Ascending aorta (tissue), 2 donors: ENCODE measurements at regions of chr17 and their contacts with region 1.

Region 1: DNA sequence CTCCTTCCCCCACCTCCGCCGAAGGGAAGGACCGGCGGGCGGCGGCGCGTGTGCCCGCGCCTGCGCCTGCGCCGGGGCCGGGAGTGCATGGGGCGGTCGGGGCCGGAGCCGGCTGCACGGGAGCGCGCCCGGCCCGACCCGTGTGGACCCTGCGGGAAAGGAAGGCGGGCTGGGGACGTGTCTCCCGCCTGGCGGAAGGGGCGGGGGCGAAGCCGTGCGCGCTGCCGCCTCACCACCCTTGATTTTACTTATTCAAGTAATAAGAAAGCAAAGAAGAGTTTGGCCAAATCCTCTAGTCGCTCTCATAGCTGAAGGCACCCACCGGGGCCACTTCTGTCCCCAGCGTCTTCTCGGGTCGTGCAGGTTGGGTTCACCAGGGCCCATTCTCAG is 596 bp upstream of the PFN1 start:
- DNase-seq: peak; percentile 32 to 91
- H3K4me3 ChIP-seq: peak overlapping the region; percentile 94 to 100
- H3K27ac ChIP-seq: peak overlapping the region; percentile 93 to 99
- H3K4me1 ChIP-seq: peaks cover 15 to 55% of the 10 kb centered on the region in 2 donors
- H3K27me3 ChIP-seq: no peaks in the 10 kb centered on the region
- CTCF ChIP-seq: no peak

Region 2: GRCh38 chr17:4973256-4974114 is 24.6 kb after region 1 on chr17:
- intact Hi-C with region 1: no loop called
- DNase-seq: no peak
- H3K4me3 ChIP-seq: no peak overlapping the region
- H3K27ac ChIP-seq: peak overlapping the region; percentile 47 to 48
- H3K4me1 ChIP-seq: peaks cover 6 to 10% of the 10 kb centered on the region in 2 donors
- H3K27me3 ChIP-seq: no peaks in the 10 kb centered on the region
- CTCF ChIP-seq: no peak

Region 3: GRCh38 chr17:4997302-4998026 is 48.5 kb after region 1 on chr17 and contains the starts of genes INCA1 and KIF1C:
- intact Hi-C with region 1: loop called (anchors 1 kb)
- DNase-seq: peak; percentile 56 to 95
- H3K4me3 ChIP-seq: peak within 1 kb of the TSS; percentile 80 to 99
- H3K27ac ChIP-seq: peak within 1 kb of the TSS; percentile 94 to 95
- H3K4me1 ChIP-seq: peaks cover 6 to 17% of the 10 kb centered on the region in 2 donors
- H3K27me3 ChIP-seq: no peaks in the 10 kb centered on the region
- CTCF ChIP-seq: peak in 2 of 3 experiments; percentile 12 to 42
- total RNA-seq, gene INCA1: not detected
- total RNA-seq, gene KIF1C: 94.0 TPM